ENCODE measurements at regions of chr17 and their contacts with region 1.

Region 1: GRCh38 chr17:67376737-67377487 is at the start of gene PITPNC1:
- DNase-seq: peak; percentile 81 to 91 (median 87)
- H3K4me3 ChIP-seq: peak within 1 kb of the TSS; percentile 93
- H3K4me3 Mint-ChIP-seq: peak within 1 kb of the TSS; percentile 88 to 99 (median 96)
- H3K27ac ChIP-seq: peak within 1 kb of the TSS; percentile 82
- H3K27ac Mint-ChIP-seq: peak within 1 kb of the TSS; percentile 87 to 98 (median 92)
- H3K4me1 ChIP-seq: peaks cover 42% of the 10 kb centered on the region
- H3K4me1 Mint-ChIP-seq: peaks cover 40 to 49% (median 42%) of the 10 kb centered on the region in 3 donors
- H3K27me3 ChIP-seq: no peaks in the 10 kb centered on the region
- H3K27me3 Mint-ChIP-seq: peaks cover 0 to 1% of the 10 kb centered on the region in 2 donors
- total RNA-seq, gene PITPNC1: 43.1 to 45.1 TPM

Region 2: GRCh38 chr17:67336859-67337258 is 40.1 kb before region 1 on chr17:
- CTCF ChIA-PET with region 1: no interaction called
- POLR2A ChIA-PET with region 1: no interaction called
- DNase-seq: no peak
- H3K4me3 ChIP-seq: no peak overlapping the region
- H3K4me3 Mint-ChIP-seq: no peak overlapping the region
- H3K27ac ChIP-seq: no peak overlapping the region
- H3K27ac Mint-ChIP-seq: peak overlapping the region in 1 of 8 donors; percentile 59
- H3K4me1 ChIP-seq: no peaks in the 10 kb centered on the region
- H3K4me1 Mint-ChIP-seq: no peaks in the 10 kb centered on the region
- H3K27me3 ChIP-seq: no peaks in the 10 kb centered on the region
- H3K27me3 Mint-ChIP-seq: peaks cover 0 to 2% of the 10 kb centered on the region in 2 donors

Region 3: GRCh38 chr17:67366193-67367157 is 10.4 kb before region 1 on chr17 and contains the start of gene PSMD12:
- CTCF ChIA-PET with region 1: interaction called, 35 read pairs
- POLR2A ChIA-PET with region 1: interaction called, 20 read pairs
- DNase-seq: peak; percentile 89 to 94 (median 93)
- H3K4me3 ChIP-seq: peak within 1 kb of the TSS; percentile 90
- H3K4me3 Mint-ChIP-seq: peak within 1 kb of the TSS; percentile 91 to 98 (median 96)
- H3K27ac ChIP-seq: peak within 1 kb of the TSS; percentile 92
- H3K27ac Mint-ChIP-seq: peak within 1 kb of the TSS; percentile 87 to 99 (median 98)
- H3K4me1 ChIP-seq: peaks cover 31% of the 10 kb centered on the region
- H3K4me1 Mint-ChIP-seq: peaks cover 38 to 55% (median 52%) of the 10 kb centered on the region in 3 donors
- H3K27me3 ChIP-seq: no peaks in the 10 kb centered on the region
- H3K27me3 Mint-ChIP-seq: peaks cover 0 to 4% of the 10 kb centered on the region in 2 donors
- total RNA-seq, gene PSMD12: 91.1 to 94.2 TPM

Region 4: DNA sequence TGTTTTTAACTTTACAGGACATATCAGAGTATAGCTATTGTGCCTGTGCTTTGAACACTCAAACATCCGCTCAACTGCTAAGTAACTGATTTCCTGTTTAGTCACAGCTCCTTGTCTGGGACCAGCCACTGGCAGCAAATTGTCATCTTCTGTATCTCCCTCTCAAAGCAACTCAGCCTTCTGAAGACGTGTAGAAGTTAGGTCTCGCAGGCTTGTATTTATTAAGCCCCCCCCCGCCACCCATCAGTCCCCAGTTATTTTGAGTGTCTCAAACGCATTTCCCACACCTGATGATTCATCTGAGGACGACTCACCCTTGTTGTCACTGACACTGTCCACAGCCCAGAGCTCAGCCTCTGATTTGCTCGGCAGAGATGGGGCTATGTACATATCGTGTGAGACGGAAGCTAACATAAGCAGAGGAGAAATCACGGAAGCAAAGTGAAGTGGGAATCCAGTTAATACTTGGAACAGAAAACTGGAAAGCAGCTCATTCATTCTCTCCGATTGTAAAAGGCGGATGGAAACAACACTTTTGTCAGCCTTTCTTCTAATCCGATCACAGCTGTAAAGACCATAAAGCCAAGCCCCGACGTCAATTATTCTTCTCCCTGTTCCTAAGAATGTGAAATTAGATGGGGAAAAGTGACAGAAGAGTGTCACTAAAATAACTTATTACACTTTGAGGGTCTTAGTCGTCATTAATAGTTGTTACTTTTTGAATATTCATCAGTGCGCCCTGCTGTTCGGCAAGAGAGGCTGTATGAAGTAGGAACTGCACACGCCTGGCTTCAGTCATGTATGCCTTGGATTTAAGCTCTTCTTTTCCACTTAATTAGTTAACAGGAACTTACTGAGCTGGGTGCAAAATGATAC is 64.4 kb after region 1 on chr17:
- CTCF ChIA-PET with region 1: interaction called, 56 read pairs
- POLR2A ChIA-PET with region 1: interaction called, 25 read pairs
- DNase-seq: peak; percentile 64 to 92 (median 85)
- H3K4me3 ChIP-seq: peak overlapping the region; percentile 67
- H3K4me3 Mint-ChIP-seq: peak overlapping the region; percentile 73 to 87 (median 80)
- H3K27ac ChIP-seq: peak overlapping the region; percentile 86
- H3K27ac Mint-ChIP-seq: peak overlapping the region; percentile 91 to 100 (median 96)
- H3K4me1 ChIP-seq: peaks cover 92% of the 10 kb centered on the region
- H3K4me1 Mint-ChIP-seq: peaks cover 73 to 94% (median 86%) of the 10 kb centered on the region in 3 donors
- H3K27me3 ChIP-seq: no peaks in the 10 kb centered on the region
- H3K27me3 Mint-ChIP-seq: no peaks in the 10 kb centered on the region

Region 5: DNA sequence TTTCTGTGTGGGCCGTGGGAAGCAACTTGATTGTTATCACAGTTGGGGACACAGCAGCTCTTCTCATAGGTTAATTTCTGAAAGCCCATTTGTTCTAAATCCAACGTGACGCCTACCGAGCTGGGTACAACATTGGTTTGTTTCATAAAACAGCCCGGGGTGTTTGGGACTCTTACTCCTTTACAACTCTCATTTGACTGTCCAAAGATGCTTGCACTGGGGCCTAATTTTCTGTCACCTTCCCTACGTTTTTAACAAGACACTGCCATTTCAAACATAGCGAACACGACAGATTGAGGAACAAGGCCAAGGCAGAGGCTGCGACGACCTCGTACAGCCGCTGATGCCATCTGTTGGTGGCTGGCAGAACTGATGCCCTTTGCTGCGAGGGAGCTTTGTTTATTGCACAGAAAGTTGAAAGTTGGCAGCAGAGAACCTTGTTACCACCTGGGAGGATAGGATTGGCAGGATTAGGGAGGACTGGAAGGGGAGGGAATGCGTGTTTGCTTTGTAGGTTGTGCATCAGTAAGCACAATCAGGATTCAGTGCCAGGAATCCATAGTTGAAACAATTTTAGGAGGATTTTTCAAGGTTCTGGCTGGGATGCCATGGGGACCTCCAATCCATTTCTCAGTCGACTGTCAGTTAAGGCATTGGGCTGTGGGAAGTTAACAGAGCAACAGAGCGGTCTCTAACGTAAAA is 98.5 kb after region 1 on chr17:
- CTCF ChIA-PET with region 1: interaction called, 269 read pairs
- POLR2A ChIA-PET with region 1: interaction called, 50 read pairs
- DNase-seq: peak; percentile 73 to 89 (median 81)
- H3K4me3 ChIP-seq: peak overlapping the region; percentile 53
- H3K4me3 Mint-ChIP-seq: peak overlapping the region; percentile 42 to 87 (median 78)
- H3K27ac ChIP-seq: peak overlapping the region; percentile 48
- H3K27ac Mint-ChIP-seq: peak overlapping the region; percentile 91 to 99 (median 94)
- H3K4me1 ChIP-seq: peaks cover 71% of the 10 kb centered on the region
- H3K4me1 Mint-ChIP-seq: peaks cover 69 to 82% (median 73%) of the 10 kb centered on the region in 3 donors
- H3K27me3 ChIP-seq: no peaks in the 10 kb centered on the region
- H3K27me3 Mint-ChIP-seq: no peaks in the 10 kb centered on the region

Region 6: GRCh38 chr17:67594115-67594880 is 217.4 kb after region 1 on chr17:
- CTCF ChIA-PET with region 1: interaction called, 18 read pairs
- POLR2A ChIA-PET with region 1: no interaction called
- DNase-seq: no peak
- H3K4me3 ChIP-seq: no peak overlapping the region
- H3K4me3 Mint-ChIP-seq: no peak overlapping the region
- H3K27ac ChIP-seq: no peak overlapping the region
- H3K27ac Mint-ChIP-seq: peak overlapping the region in 5 of 8 donors; percentile 17 to 69 (median 32)
- H3K4me1 ChIP-seq: no peaks in the 10 kb centered on the region
- H3K4me1 Mint-ChIP-seq: peaks cover 19 to 60% (median 35%) of the 10 kb centered on the region in 3 donors
- H3K27me3 ChIP-seq: no peaks in the 10 kb centered on the region
- H3K27me3 Mint-ChIP-seq: no peaks in the 10 kb centered on the region

Region 7: GRCh38 chr17:68627956-68628575 is 1251.2 kb after region 1 on chr17:
- CTCF ChIA-PET with region 1: no interaction called
- POLR2A ChIA-PET with region 1: no interaction called
- DNase-seq: no peak
- H3K4me3 ChIP-seq: no peak overlapping the region
- H3K4me3 Mint-ChIP-seq: no peak overlapping the region
- H3K27ac ChIP-seq: no peak overlapping the region
- H3K27ac Mint-ChIP-seq: peak overlapping the region in 1 of 8 donors; percentile 47
- H3K4me1 ChIP-seq: no peaks in the 10 kb centered on the region
- H3K4me1 Mint-ChIP-seq: no peaks in the 10 kb centered on the region
- H3K27me3 ChIP-seq: no peaks in the 10 kb centered on the region
- H3K27me3 Mint-ChIP-seq: peaks cover 6 to 14% of the 10 kb centered on the region in 2 donors